Naive thymus-derived CD8-positive, alpha-beta T cell (primary cell): ENCODE measurements at regions of chr12 and their contacts with region 1.

Region 1: DNA sequence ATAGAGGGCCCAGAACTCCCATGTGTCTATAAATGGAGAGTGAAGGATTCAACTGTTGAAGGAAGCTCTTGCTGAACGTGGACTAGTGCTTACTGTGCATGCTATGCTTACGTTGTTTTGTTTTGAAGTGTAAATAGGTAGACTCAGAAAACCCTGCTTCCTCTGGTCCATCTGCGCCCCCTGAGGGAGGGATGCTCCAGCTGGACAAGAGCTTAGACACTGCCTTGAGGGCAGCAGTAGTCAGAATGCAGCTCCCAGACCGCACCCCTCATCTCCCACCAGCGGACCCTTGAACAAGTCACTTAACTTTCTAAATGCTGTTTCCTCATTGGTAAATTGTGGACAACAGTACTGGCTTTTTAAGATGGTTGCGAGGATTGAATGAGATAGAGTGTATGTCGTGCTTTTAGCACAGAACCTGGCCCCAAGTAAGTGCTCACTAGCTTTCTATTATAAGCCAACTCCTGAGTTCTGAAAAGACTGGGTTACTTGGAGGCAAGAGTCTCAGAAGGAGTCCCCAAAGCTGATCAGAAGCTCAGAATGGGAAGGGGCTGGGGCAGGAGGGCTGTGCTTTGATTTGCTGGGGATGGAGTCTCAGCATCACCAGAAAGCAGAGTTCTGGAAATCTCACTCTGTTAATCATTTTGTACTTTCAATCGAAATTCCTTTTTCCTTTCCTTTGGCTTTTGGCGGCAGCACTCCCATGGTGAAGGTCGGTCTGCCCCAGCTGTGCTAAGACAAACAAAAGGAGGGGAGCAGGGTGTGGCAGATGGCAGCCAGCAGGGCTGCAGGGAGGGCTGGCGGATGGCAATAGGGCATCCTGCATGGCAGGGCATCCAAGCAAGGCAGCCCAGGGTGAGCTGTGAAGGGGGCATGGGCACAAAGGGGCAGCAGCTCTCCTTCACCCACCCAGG is 15.6 kb downstream of the AGAP2 start:
- DNase-seq: no peak
- ATAC-seq: peak in 1 of 2 donors; percentile 21
- H3K4me3 Mint-ChIP-seq: no peak overlapping the region
- H3K27ac Mint-ChIP-seq: peak overlapping the region in 9 of 10 donors; percentile 19 to 87 (median 62)
- H3K4me1 Mint-ChIP-seq: peaks cover 16 to 50% (median 35%) of the 10 kb centered on the region in 4 donors
- H3K27me3 Mint-ChIP-seq: no peaks in the 10 kb centered on the region

Region 2: GRCh38 chr12:57687862-57688261 is 35.1 kb before region 1 on chr12:
- POLR2A ChIA-PET with region 1: no interaction called
- DNase-seq: no peak
- ATAC-seq: no peak
- H3K4me3 Mint-ChIP-seq: no peak overlapping the region
- H3K27ac Mint-ChIP-seq: no peak overlapping the region
- H3K4me1 Mint-ChIP-seq: peaks cover 0 to under 1% (median 0%) of the 10 kb centered on the region in 4 donors
- H3K27me3 Mint-ChIP-seq: peaks cover 10 to 49% (median 25%) of the 10 kb centered on the region in 5 donors

Region 3: GRCh38 chr12:57737467-57738460 is 14.8 kb after region 1 on chr12:
- POLR2A ChIA-PET with region 1: interaction called, 16 read pairs
- DNase-seq: no peak
- ATAC-seq: no peak
- H3K4me3 Mint-ChIP-seq: no peak overlapping the region
- H3K27ac Mint-ChIP-seq: no peak overlapping the region
- H3K4me1 Mint-ChIP-seq: peaks cover 30 to 56% (median 48%) of the 10 kb centered on the region in 4 donors
- H3K27me3 Mint-ChIP-seq: no peaks in the 10 kb centered on the region

Region 4: GRCh38 chr12:57744777-57745484 is 22.0 kb after region 1 on chr12 and contains the start of gene TSPAN31:
- POLR2A ChIA-PET with region 1: interaction called, 16 read pairs
- DNase-seq: peak; percentile 82 to 97 (median 93)
- ATAC-seq: peak; percentile 79 to 82
- H3K4me3 Mint-ChIP-seq: peak within 1 kb of the TSS; percentile 88 to 99 (median 93)
- H3K27ac Mint-ChIP-seq: peak within 1 kb of the TSS; percentile 92 to 99 (median 97)
- H3K4me1 Mint-ChIP-seq: peaks cover 24 to 57% (median 50%) of the 10 kb centered on the region in 4 donors
- H3K27me3 Mint-ChIP-seq: no peaks in the 10 kb centered on the region
- polyA plus RNA-seq, gene TSPAN31: 42.2 to 53.3 (median 47.3) TPM

Region 5: DNA sequence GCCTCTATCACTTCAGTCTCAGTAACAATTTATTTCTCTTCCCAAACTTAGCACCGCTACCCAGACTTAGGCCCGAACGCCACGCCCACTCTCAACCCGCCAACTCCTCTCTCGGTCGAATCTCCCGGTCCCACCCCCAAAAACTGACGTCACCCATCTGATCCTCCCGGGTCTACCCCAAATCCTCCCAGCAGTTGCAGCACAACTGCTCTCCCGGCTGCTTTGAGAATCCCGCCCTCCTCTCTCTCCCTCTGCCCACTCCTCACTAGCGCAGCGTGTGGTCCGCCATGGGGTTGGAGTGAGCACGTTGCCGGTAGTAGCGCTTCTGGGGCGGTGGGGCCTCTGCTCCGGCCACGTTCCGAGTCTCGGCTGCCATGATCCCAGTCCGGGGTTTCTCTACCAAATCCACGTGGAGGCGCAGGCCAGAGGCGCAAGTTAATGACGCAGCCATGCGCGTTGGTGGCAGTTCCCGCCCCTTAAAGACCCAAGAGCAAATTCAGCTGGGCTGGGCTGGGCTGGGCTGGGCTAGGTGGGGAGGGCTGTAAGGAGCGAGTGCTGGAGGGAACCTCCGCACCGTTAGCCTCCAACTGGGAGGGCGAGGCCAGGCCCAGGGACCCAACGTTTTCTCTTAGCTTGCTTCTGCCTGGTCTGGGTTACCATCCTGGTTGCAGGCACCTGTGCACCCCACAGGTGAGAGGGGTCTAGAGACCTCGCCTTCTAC is 48.9 kb after region 1 on chr12 and contains the start of gene METTL1:
- POLR2A ChIA-PET with region 1: no interaction called
- DNase-seq: peak; percentile 74 to 93 (median 87)
- ATAC-seq: peak; percentile 88
- H3K4me3 Mint-ChIP-seq: peak within 1 kb of the TSS; percentile 94 to 99 (median 98)
- H3K27ac Mint-ChIP-seq: peak within 1 kb of the TSS; percentile 86 to 99 (median 98)
- H3K4me1 Mint-ChIP-seq: peaks cover 17 to 32% (median 22%) of the 10 kb centered on the region in 4 donors
- H3K27me3 Mint-ChIP-seq: peaks cover 0 to 1% (median 0%) of the 10 kb centered on the region in 5 donors
- polyA plus RNA-seq, gene METTL1: 12.9 to 21.7 (median 18.7) TPM